CD4-positive, alpha-beta memory T cell (primary cell): ENCODE measurements at regions of chr18 and their contacts with region 1.

Region 1: GRCh38 chr18:23131693-23132319 is 3.5 kb upstream of the CABLES1 start:
- DNase-seq: peak; percentile 54 to 67 (median 58)
- H3K4me3 ChIP-seq: no peak overlapping the region
- H3K4me3 Mint-ChIP-seq: peak overlapping the region in 1 of 8 donors; percentile 22
- H3K27ac ChIP-seq: no peak overlapping the region
- H3K27ac Mint-ChIP-seq: no peak overlapping the region
- H3K4me1 ChIP-seq: peaks cover 19% of the 10 kb centered on the region
- H3K4me1 Mint-ChIP-seq: peaks cover 9 to 18% (median 11%) of the 10 kb centered on the region in 4 donors
- H3K27me3 ChIP-seq: peaks cover 15% of the 10 kb centered on the region
- H3K27me3 Mint-ChIP-seq: peaks cover 19 to 21% of the 10 kb centered on the region in 2 donors

Region 2: DNA sequence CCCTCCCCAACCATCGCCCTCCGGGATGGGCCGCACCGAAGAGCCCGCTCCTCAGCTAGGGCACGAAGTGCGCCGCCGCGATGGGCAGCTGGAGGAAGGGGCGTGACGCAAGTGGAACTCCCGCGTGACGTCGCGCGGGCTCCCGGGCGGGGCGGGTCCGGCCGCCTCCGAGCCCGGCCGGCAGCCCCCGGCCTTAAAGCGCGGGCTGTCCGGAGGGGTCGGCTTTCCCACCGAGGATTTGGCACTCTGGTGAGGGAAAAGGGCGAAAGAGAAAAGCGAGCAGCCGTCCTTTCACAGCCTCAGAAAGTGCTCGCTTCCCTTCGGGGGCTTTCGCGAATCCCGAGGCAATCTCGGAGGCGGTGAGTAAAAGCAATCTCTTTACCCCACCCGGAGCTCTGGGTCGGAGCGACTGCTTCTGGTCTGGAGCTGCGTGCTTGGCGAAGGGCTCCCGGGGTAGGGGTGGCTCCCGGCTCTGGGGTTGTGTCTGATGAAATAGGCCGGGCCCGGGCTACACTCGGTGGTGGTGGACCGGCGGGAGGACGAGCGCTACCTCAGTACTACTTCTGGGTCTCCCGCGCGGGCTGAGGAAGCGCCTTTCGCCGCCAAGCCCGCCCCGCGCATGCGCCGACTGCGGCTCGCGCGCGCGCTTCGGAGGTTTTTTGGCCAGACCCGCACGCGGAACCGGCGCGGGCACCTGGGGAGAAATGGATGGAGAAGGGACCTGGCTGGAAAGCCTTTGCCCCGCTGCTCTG is 198.4 kb before region 1 on chr18 and contains the start of gene RBBP8:
- CTCF ChIA-PET with region 1: no interaction called
- POLR2A ChIA-PET with region 1: no interaction called
- intact Hi-C with region 1: loop called (anchors 1 kb)
- DNase-seq: peak; percentile 70 to 90 (median 86)
- H3K4me3 ChIP-seq: peak within 1 kb of the TSS; percentile 59 to 90
- H3K4me3 Mint-ChIP-seq: peak within 1 kb of the TSS; percentile 85 to 94 (median 88)
- H3K27ac ChIP-seq: peak within 1 kb of the TSS; percentile 82
- H3K27ac Mint-ChIP-seq: peak within 1 kb of the TSS; percentile 79 to 98 (median 93)
- H3K4me1 ChIP-seq: peaks cover 7% of the 10 kb centered on the region
- H3K4me1 Mint-ChIP-seq: peaks cover 10 to 16% (median 12%) of the 10 kb centered on the region in 4 donors
- H3K27me3 ChIP-seq: no peaks in the 10 kb centered on the region
- H3K27me3 Mint-ChIP-seq: no peaks in the 10 kb centered on the region
- total RNA-seq, gene RBBP8: 1.4 to 3.0 TPM

Region 3: DNA sequence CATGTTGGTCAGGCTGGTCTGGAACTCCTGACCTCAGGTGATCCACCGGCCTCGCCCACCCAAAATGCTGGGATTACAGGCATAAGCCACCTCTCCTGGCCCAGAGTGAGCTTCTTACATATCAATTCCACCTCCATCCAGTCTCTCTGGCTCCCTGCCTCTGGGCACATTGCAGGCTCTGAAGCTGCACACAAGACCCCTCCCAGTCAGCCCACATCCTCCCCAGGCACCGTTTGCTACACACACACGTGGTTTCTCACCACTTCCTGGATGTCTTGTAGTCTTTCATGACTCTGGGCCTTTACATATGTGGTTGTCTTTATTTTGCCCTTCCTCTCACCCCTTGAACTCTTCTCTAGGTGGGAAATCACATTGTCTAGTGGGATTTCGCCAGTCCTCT is 60.5 kb before region 1 on chr18:
- CTCF ChIA-PET with region 1: interaction called, 16 read pairs
- POLR2A ChIA-PET with region 1: interaction called, 5 read pairs
- intact Hi-C with region 1: loop called (anchors 5 kb)
- DNase-seq: peak; percentile 87 to 93 (median 90)
- H3K4me3 ChIP-seq: peak overlapping the region in 1 of 2 donors; percentile 13
- H3K4me3 Mint-ChIP-seq: peak overlapping the region; percentile 37 to 95 (median 76)
- H3K27ac ChIP-seq: no peak overlapping the region
- H3K27ac Mint-ChIP-seq: peak overlapping the region; percentile 74 to 96 (median 92)
- H3K4me1 ChIP-seq: peaks cover 64% of the 10 kb centered on the region
- H3K4me1 Mint-ChIP-seq: peaks cover 51 to 79% (median 59%) of the 10 kb centered on the region in 4 donors
- H3K27me3 ChIP-seq: no peaks in the 10 kb centered on the region
- H3K27me3 Mint-ChIP-seq: no peaks in the 10 kb centered on the region

Region 4: DNA sequence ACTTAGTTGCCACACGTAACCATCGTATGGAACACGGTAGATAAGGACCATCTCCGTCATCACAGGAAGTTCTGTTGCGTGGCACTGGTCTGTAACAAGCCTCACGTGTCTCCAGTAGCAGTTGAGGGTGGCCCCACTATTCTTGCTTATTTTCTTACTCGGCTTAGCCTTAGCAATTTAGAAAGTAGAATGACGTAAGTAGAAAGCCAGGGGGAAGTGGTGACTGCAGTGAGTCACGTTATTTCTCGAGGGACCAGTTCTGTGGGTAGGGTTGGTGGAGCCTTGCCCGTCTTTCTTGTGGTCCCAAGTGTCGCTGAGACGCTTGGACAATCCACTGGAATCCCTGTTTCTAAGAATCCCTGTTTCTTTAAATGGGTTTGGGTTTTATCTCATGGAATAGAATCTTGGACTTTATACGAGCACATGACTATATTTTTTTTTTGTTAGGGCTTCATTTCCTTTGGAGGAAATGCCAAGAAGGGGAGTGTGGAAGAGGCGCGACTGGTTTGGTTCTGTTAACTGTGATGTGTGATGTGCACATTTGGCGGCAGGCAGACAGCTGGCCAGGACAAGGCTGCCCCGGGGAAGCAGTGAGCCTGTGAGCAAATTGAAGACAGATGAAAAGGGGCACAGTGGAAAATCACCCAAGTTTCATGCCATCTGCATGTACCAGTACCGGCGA is 99.7 kb after region 1 on chr18:
- CTCF ChIA-PET with region 1: interaction called, 4 read pairs
- POLR2A ChIA-PET with region 1: no interaction called
- intact Hi-C with region 1: loop called (anchors 2 kb)
- DNase-seq: peak; percentile 75 to 93 (median 83)
- H3K4me3 ChIP-seq: peak overlapping the region in 1 of 2 donors; percentile 27
- H3K4me3 Mint-ChIP-seq: peak overlapping the region; percentile 10 to 83 (median 66)
- H3K27ac ChIP-seq: peak overlapping the region; percentile 34
- H3K27ac Mint-ChIP-seq: peak overlapping the region; percentile 93 to 97 (median 95)
- H3K4me1 ChIP-seq: peaks cover 15% of the 10 kb centered on the region
- H3K4me1 Mint-ChIP-seq: peaks cover 8 to 47% (median 17%) of the 10 kb centered on the region in 4 donors
- H3K27me3 ChIP-seq: no peaks in the 10 kb centered on the region
- H3K27me3 Mint-ChIP-seq: no peaks in the 10 kb centered on the region

Region 5: DNA sequence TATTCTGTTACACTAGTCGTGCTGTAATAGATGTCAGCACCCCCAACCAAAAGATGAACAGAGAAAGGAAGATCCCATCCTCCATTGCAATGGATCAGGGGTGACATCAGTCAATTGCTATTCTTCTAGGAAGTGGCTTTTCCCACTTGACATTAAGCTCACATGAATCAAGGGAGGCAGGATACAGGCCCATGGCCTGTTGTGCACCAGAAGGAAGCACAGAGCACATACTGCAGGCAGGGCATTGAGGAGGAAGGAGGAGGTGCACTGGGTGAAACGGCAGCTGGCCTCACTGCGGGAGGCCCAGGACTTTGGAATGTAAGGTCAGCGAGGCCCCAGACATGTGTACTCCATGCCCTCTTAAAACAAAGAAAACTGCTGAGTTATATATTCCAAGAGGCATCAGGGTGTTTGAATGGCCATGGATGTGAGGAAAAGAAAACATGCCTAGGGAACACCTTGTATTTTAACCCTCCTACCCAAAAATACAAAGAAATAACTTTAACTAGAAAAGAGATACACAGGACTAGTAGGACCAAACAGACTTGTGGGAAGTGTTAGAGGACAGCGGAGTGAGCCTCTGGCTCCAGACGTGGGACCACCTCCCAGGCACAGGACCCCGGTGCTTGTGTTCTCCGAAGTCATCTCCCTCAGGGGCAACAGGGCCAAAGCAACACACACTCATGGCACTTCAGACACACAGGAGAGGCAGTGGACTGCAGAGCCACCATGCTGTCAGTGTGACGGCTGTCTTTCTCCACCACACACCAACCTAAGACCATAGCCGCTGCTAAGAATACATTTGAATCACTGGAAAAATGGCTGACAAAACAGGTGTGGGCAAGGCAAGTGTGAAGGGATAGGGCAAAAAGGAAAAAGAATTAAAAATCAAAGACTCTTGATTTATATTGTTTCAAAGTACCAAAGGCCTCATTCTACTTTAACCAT is 269.9 kb after region 1 on chr18:
- CTCF ChIA-PET with region 1: interaction called, 10 read pairs
- POLR2A ChIA-PET with region 1: no interaction called
- intact Hi-C with region 1: no loop called
- DNase-seq: no peak
- H3K4me3 ChIP-seq: no peak overlapping the region
- H3K4me3 Mint-ChIP-seq: no peak overlapping the region
- H3K27ac ChIP-seq: no peak overlapping the region
- H3K27ac Mint-ChIP-seq: no peak overlapping the region
- H3K4me1 ChIP-seq: no peaks in the 10 kb centered on the region
- H3K4me1 Mint-ChIP-seq: peaks cover 0 to 6% (median 1%) of the 10 kb centered on the region in 4 donors
- H3K27me3 ChIP-seq: no peaks in the 10 kb centered on the region
- H3K27me3 Mint-ChIP-seq: no peaks in the 10 kb centered on the region

Region 6: DNA sequence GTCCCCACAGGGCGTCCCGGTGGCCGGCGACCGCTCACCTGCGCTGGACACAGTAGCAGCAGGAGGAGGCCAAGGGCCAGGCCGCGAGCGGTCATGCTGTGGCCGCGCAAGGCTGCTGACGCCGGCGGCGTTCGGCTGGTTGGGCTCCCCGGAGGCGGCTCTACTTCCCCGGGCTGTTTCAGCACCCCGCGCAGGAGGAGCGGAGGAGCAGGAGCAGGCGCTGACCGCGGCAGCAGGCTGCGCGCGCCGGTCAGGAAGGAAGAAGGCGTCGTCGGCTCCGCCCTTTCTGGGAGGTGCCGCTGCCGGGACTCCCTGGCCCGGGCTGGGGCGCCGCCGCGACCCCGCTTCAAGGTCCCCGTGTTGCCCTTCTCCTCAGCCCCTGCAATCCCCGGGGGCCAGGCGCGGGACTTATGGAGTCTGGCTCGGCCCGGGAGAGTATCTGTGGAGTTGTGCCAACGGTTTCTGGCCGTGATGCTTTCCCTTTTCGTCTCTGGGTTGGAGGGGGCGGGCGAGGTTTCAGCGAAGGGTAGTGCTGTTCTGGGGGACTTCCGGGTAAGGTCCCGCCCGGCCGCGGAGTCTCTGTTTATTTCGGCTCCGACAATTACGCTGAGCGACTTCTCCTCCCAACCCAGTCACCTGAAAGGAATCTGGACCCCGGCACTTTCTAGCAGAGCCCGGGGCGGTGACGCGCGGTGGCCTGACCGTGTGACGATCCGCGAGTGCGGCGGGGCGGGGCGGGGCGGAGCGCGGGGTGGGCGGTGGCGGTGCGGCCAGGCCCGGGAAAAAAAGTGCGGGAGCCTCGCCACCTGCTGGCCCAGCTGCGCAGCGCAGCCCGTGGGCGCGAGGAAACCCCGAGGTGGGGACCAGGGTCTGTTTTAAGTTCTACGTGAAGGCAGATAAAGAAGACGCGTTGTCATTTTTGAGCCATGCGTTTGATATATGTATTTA is 454.7 kb after region 1 on chr18 and contains the start of gene NPC1:
- CTCF ChIA-PET with region 1: no interaction called
- POLR2A ChIA-PET with region 1: no interaction called
- intact Hi-C with region 1: loop called (anchors 2 kb)
- DNase-seq: peak; percentile 91 to 95 (median 94)
- H3K4me3 ChIP-seq: peak within 1 kb of the TSS; percentile 77 to 87
- H3K4me3 Mint-ChIP-seq: peak within 1 kb of the TSS; percentile 87 to 96 (median 94)
- H3K27ac ChIP-seq: peak within 1 kb of the TSS; percentile 97
- H3K27ac Mint-ChIP-seq: peak within 1 kb of the TSS; percentile 95 to 98 (median 97)
- H3K4me1 ChIP-seq: peaks cover 46% of the 10 kb centered on the region
- H3K4me1 Mint-ChIP-seq: peaks cover 25 to 47% (median 37%) of the 10 kb centered on the region in 4 donors
- H3K27me3 ChIP-seq: no peaks in the 10 kb centered on the region
- H3K27me3 Mint-ChIP-seq: peaks cover 0 to 4% of the 10 kb centered on the region in 2 donors
- total RNA-seq, gene NPC1: 62.9 to 64.5 TPM